ENCODE measurements at regions of chr20 and their contacts with region 1.

Region 1: GRCh38 chr20:49384437-49385088 is 97.9 kb downstream of the KCNB1 start:
- H3K4me3 ChIP-seq: no peak overlapping the region
- H3K27ac ChIP-seq: no peak overlapping the region
- H3K4me1 ChIP-seq: 0 out of 2 replicates have a peak, but pooled peaks cover 3% of the 10 kb centered on the region
- CTCF ChIP-seq: peak; percentile 60

Region 2: DNA sequence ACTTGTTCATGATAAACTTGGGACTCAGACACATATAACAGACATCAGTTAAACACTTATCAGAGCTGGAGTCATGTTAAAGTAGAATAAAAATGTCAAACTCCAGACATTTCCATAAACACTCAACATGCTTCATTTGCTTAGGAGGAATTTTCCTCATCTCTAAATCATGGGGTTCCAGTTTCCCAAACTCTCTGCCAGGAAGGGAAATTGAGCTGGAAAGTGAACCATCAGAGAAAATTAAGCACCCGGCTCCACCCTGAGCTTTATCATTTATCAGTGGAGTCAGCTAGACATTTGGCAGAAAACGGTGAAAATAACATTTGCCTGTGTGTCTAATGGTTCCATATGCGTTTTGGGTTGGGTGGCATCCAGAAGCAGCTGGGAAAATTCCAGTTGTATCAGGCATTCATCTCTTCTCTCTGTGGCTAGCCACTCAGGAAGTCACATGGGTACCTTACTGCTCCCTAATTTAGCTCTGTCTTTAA is 81.5 kb before region 1 on chr20:
- CTCF ChIA-PET with region 1: no interaction called
- POLR2A ChIA-PET with region 1: no interaction called
- H3K4me3 ChIP-seq: no peak overlapping the region
- H3K27ac ChIP-seq: no peak overlapping the region
- H3K4me1 ChIP-seq: no peaks in the 10 kb centered on the region
- CTCF ChIP-seq: no peak

Region 3: DNA sequence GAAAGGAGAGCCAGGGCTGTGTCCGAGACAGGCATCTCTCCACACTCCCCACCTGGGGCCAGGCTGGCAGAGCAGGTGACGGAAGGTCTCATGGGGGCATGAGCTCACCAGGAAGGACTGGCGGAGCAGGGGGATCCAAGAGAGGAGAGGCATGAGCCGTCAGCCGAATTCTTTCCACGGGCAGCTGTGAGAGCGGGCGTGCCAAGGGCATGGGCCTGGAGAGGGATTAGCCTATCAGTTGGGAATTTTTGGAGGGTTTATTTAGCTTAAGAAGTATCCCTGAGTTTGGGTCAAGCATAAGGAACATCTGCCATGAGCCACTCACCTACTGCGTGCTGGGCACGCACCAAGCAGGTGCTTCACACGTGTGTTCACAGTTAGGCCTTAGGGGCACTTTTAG is 46.5 kb before region 1 on chr20:
- CTCF ChIA-PET with region 1: interaction called, 11 read pairs
- POLR2A ChIA-PET with region 1: no interaction called
- H3K4me3 ChIP-seq: no peak overlapping the region
- H3K27ac ChIP-seq: no peak overlapping the region
- H3K4me1 ChIP-seq: no peaks in the 10 kb centered on the region
- CTCF ChIP-seq: no peak

Region 4: GRCh38 chr20:49356676-49357075 is 27.9 kb before region 1 on chr20:
- CTCF ChIA-PET with region 1: interaction called, 13 read pairs
- POLR2A ChIA-PET with region 1: no interaction called
- H3K4me3 ChIP-seq: no peak overlapping the region
- H3K27ac ChIP-seq: no peak overlapping the region
- H3K4me1 ChIP-seq: no peaks in the 10 kb centered on the region
- CTCF ChIP-seq: no peak

Region 5: DNA sequence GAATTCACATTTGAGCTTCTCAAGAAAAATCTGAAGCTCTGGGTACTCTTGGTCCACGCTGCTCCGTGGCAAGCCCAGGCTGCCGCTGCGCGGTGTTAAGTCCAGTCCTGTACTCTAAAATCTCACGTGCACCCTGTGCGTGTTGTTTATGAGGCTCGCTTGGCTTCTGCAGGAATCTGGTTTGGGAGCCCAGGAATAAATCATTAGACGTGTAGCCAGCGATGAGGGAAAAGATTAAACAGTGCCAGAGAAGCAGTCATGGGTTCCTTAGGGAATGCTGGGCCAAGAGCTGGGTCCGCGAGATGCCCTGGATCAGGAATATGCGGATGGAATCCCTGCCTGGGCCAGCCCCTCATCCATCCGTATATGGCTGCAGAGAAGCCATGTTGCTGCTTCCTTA is 10.6 kb after region 1 on chr20:
- CTCF ChIA-PET with region 1: interaction called, 21 read pairs
- POLR2A ChIA-PET with region 1: no interaction called
- H3K4me3 ChIP-seq: no peak overlapping the region
- H3K27ac ChIP-seq: no peak overlapping the region
- H3K4me1 ChIP-seq: no peaks in the 10 kb centered on the region
- CTCF ChIP-seq: no peak

Region 6: GRCh38 chr20:49508435-49509199 is 124.1 kb after region 1 on chr20:
- CTCF ChIA-PET with region 1: interaction called, 12 read pairs
- POLR2A ChIA-PET with region 1: no interaction called
- H3K4me3 ChIP-seq: no peak overlapping the region
- H3K27ac ChIP-seq: no peak overlapping the region
- H3K4me1 ChIP-seq: no peaks in the 10 kb centered on the region
- CTCF ChIP-seq: peak; percentile 57

Measured in HEK293 (cell line).